ENCODE measurements at regions of chr6 and their contacts with region 1.

Region 1: DNA sequence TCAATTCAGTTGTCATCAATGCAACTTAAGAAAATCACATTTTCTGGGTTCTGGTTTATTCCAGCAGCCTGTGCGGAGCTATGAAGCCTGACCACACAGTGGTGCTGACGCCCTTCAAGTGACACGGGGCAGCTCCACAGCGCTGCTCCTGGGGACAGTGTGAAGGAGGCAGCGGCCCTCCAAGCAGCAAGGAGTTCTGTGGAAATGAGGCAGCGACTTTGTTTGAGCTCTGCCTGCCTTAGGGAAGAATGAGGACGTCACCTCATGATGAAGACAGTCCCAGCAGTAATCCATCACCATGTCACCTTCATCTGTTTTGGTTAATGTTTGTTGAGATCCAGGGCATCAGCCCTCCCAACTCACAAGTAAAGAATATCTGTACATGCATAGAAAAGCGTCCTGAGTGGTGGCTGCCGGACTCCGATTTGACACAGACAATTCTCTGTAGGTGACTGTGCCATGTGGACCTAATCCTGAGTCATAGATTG is 168.5 kb upstream of the UST start:
- DNase-seq: peak; percentile 57 to 76
- ATAC-seq: peak; percentile 100
- H3K4me3 ChIP-seq: no peak overlapping the region
- H3K27ac ChIP-seq: no peak overlapping the region
- H3K4me1 ChIP-seq: no peaks in the 10 kb centered on the region
- CTCF ChIP-seq: peak; percentile 85
- EP300 ChIP-seq: no peak
- POLR2A ChIP-seq: no peak
- RAD21 ChIP-seq: peak; percentile 87

Region 2: DNA sequence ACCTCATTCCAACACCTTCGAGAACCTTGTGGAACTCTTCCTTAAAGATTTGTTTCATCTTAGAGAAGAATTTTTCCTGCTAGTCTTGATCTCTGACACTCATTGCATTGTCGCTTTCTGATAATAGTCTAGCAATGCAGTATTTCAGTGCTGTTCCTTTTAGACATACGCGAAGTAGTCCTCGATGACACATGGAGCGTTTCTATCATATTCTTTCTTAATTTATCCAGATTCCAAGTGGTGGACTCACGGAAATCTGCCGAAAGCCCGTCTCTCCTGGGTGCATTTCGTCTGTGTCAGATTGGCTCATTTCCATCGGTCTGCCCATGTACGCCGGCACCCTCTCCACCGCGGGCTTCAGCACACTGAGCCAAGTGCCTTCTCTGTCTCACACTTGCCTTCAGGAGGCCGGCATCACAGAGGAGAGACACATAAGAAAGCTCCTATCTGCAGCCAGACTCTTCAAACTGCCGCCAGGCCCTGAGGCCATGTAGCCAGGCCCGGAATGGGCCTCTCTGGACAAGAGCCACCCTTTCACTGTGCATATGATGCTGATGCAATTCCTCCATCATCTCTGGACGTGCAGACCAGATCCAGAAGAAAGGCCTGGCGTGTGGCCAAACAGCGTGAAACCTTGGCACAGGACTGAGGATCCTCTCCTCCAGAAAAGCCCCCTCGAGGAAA is 30.1 kb before region 1 on chr6:
- CTCF ChIA-PET with region 1: no interaction called
- POLR2A ChIA-PET with region 1: no interaction called
- DNase-seq: no peak
- ATAC-seq: no peak
- H3K4me3 ChIP-seq: no peak overlapping the region
- H3K27ac ChIP-seq: no peak overlapping the region
- H3K4me1 ChIP-seq: no peaks in the 10 kb centered on the region
- CTCF ChIP-seq: no peak
- EP300 ChIP-seq: no peak
- POLR2A ChIP-seq: no peak
- RAD21 ChIP-seq: no peak

Region 3: GRCh38 chr6:148593130-148593812 is 15.0 kb after region 1 on chr6:
- CTCF ChIA-PET with region 1: interaction called, 19 read pairs
- POLR2A ChIA-PET with region 1: no interaction called
- DNase-seq: no peak
- ATAC-seq: no peak
- H3K4me3 ChIP-seq: no peak overlapping the region
- H3K27ac ChIP-seq: no peak overlapping the region
- H3K4me1 ChIP-seq: 0 out of 3 replicates have a peak, but pooled peaks cover 2% of the 10 kb centered on the region
- CTCF ChIP-seq: no peak
- EP300 ChIP-seq: no peak
- POLR2A ChIP-seq: no peak
- RAD21 ChIP-seq: no peak

Region 4: GRCh38 chr6:148671085-148671484 is 92.8 kb after region 1 on chr6:
- CTCF ChIA-PET with region 1: no interaction called
- POLR2A ChIA-PET with region 1: no interaction called
- DNase-seq: no peak
- ATAC-seq: no peak
- H3K4me3 ChIP-seq: no peak overlapping the region
- H3K27ac ChIP-seq: no peak overlapping the region
- H3K4me1 ChIP-seq: no peaks in the 10 kb centered on the region
- CTCF ChIP-seq: no peak
- EP300 ChIP-seq: no peak
- POLR2A ChIP-seq: no peak
- RAD21 ChIP-seq: no peak

Region 5: DNA sequence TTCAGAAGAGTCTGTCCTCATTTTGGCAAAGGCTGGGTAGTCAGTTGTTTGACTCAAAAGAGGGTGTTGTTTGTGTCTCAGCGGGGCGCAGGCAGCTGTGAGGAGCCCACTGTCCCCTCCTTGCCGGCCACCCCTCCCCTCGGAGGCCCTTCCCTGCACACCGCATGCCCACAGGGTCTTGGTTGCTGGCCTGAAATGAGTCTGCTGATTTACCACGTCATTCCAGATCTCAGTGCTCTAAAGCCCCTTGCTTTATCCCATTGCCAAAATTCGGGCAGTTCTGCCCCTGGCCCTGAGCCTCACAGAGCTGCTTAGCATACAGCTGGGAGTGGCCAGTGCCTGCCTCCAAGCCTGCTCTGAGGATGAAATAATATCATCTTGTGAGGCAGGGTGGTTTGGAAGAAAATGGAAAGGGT is 389.3 kb after region 1 on chr6:
- CTCF ChIA-PET with region 1: interaction called, 10 read pairs
- POLR2A ChIA-PET with region 1: no interaction called
- DNase-seq: no peak
- ATAC-seq: no peak
- H3K4me3 ChIP-seq: no peak overlapping the region
- H3K27ac ChIP-seq: no peak overlapping the region
- H3K4me1 ChIP-seq: no peaks in the 10 kb centered on the region
- CTCF ChIP-seq: no peak
- EP300 ChIP-seq: no peak
- POLR2A ChIP-seq: no peak
- RAD21 ChIP-seq: no peak